Sigmoid colon (tissue), 7 donors: ENCODE measurements at regions of chr5 and their contacts with region 1.

Region 1: DNA sequence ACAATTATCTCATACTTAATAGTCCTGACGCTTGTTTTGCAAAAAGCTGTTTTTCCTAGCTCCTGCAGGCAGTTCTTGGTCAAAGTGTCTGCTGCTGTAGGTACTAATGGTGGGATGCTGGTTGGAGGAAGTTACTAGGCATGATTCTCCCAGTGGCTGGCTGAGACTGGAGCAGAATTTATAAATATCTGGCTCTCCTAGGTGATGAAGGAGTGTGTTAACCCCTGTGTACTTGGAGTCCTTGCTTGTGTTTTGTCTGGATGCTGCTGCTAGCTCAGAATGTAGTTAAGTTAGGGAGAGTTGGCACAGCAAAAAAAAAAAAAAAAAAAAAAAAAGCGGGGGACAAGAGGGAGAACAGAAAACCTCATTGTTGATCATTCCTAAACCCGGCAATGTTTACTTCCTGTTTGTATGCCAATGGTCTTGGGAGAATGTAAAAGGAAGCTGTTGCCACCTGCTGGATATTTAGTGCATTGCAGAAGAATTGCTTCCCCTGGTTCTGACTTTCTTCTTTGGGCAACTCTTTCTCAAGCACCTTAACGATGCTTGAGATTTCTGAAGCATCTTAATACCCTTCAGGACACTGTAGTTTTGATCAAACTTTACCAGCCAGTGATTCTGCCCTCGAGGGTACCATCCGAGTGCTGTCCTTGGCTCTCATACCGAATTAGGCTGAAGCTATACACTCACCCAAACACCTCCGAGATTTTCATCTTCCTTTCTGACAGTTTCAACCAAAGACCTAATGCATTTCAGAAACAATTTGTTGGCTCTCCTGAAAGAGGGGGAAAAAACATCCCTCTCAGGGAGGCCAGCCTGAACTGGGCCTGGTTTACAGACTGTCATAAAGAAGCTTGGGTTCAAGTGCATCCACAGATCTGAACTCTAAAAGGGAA is 71.7 kb upstream of the WWC1 start:
- DNase-seq: no peak
- H3K4me3 ChIP-seq: no peak overlapping the region
- H3K27ac ChIP-seq: no peak overlapping the region
- H3K4me1 ChIP-seq: peaks cover 0 to 5% (median 0%) of the 10 kb centered on the region in 4 donors
- H3K27me3 ChIP-seq: no peaks in the 10 kb centered on the region
- CTCF ChIP-seq: peak; percentile 66 to 86 (median 79)
- EP300 ChIP-seq: no peak
- POLR2A ChIP-seq: no peak

Region 2: DNA sequence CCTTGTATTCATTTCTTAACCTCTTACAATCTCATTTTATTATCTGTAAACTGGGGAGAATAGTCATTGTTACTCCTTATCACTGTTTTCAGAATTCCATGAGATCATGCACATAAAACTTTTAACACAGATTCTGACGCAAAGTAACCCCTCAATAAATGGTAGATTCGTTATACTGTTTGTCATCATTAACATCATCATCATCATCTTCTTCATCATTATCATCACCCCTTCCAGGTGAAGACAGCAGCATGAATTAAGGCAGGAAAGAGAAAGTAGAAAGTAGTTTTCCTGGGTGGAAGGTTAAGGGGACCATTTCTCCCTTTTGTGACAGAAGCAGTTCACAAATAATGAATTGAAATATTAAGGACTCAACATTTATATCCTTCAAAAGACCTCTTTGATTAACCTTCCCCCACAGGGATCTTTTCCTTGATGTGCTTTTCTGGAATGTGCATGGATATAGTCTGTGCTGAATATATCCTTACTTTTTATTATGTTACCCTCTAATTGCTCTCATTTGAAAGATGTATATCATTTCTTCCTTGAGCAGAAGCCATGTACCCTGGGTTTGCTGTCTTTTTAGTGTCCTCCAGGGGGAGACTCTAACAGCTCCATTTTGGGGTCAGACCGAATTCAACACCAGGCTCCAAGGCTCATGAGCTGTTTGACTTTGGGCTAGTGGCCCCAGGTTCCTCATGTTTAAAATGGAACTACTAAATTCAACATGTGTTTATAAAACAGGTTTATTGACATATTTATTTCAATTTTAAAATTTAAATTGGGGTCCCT is 958.3 kb before region 1 on chr5:
- intact Hi-C with region 1: loop called (anchors 10 kb)
- DNase-seq: no peak
- H3K4me3 ChIP-seq: no peak overlapping the region
- H3K27ac ChIP-seq: no peak overlapping the region
- H3K4me1 ChIP-seq: peaks cover 0 to 3% (median 0%) of the 10 kb centered on the region in 4 donors
- H3K27me3 ChIP-seq: no peaks in the 10 kb centered on the region
- CTCF ChIP-seq: no peak
- EP300 ChIP-seq: no peak
- POLR2A ChIP-seq: no peak

Region 3: GRCh38 chr5:168086104-168086610 is 133.6 kb before region 1 on chr5:
- intact Hi-C with region 1: loop called (anchors 5 kb)
- DNase-seq: peak; percentile 80
- H3K4me3 ChIP-seq: no peak overlapping the region
- H3K27ac ChIP-seq: peak overlapping the region in 3 of 4 donors; percentile 40 to 73 (median 53)
- H3K4me1 ChIP-seq: peaks cover 0 to 29% (median 28%) of the 10 kb centered on the region in 4 donors
- H3K27me3 ChIP-seq: no peaks in the 10 kb centered on the region
- CTCF ChIP-seq: peak in 1 of 4 experiments; percentile 9
- EP300 ChIP-seq: peak; percentile 36 to 95 (median 86)
- POLR2A ChIP-seq: no peak

Region 4: GRCh38 chr5:168390491-168390890 is 170.7 kb after region 1 on chr5:
- intact Hi-C with region 1: no loop called
- DNase-seq: no peak
- H3K4me3 ChIP-seq: no peak overlapping the region
- H3K27ac ChIP-seq: no peak overlapping the region
- H3K4me1 ChIP-seq: no peaks in the 10 kb centered on the region
- H3K27me3 ChIP-seq: no peaks in the 10 kb centered on the region
- CTCF ChIP-seq: no peak
- EP300 ChIP-seq: no peak
- POLR2A ChIP-seq: no peak

Region 5: DNA sequence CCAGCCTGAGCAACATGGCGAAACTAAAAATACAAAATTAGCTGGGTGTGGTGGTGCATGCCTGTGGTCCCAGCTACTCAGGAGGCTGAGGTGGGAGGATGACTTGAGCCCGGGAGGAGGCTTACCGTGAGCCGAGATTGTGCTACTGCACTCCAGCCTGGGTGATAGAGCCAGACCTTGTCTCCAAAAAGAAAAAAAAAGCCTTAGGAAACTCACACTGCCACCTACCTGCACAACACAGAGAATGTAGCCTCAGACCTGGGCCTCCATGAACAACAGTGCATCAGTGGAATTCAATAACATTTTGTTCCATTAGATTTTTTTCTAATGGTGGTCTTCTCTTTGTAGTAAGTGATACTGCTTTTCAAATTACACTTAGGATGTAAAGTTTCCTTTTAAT is 202.7 kb after region 1 on chr5:
- intact Hi-C with region 1: no loop called
- DNase-seq: no peak
- H3K4me3 ChIP-seq: no peak overlapping the region
- H3K27ac ChIP-seq: no peak overlapping the region
- H3K4me1 ChIP-seq: no peaks in the 10 kb centered on the region
- H3K27me3 ChIP-seq: no peaks in the 10 kb centered on the region
- CTCF ChIP-seq: no peak
- EP300 ChIP-seq: no peak
- POLR2A ChIP-seq: no peak